CD4-positive, alpha-beta T cell (primary cell): ENCODE measurements at regions of chr1 and their contacts with region 1.

Region 1: DNA sequence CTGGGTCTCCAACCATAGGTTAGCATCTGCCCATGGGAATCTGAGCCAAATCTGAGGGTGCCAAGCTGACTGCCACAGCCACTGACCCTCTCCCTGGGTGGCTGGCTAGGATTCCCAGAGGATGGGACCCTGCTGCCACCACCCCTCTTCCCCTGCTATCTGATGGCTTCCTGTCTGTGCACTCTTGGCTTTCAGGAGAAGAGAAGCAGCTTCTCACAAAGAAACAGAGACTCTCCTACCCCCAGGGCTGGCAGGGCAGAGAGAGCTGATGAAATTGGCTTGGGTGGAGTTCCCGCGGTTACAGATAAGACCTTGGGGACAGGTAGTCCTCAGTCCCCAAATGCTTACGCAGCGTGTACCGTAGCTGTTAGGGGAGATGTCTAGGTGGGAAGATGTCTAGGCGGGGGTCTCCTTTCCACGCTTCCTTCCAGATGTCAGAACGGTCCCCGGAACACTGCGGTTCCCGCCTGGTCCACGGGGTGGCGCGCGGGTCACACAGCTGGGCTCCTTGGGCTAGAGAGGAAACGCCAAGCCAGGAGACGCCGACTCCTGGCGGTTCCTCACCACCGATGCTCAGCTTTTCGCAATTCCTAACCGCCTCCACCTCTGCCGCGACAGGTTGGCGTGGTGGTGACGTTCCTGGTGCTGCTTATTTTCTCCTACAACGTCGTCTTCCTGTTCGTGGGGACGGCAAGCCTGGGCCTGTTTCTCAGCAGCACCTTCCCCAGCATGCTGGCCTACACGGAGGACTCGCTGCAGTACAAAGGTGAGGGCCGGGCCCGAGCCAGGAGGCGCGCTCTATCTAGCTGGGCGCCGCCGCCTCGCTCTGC is 40.1 kb downstream of the ELK4 start:
- DNase-seq: peak; percentile 81 to 94 (median 88)
- ATAC-seq: peak; percentile 85
- H3K4me3 ChIP-seq: peak overlapping the region; percentile 50
- H3K4me3 Mint-ChIP-seq: peak overlapping the region; percentile 90
- H3K27ac ChIP-seq: peak overlapping the region; percentile 23 to 45
- H3K27ac Mint-ChIP-seq: peak overlapping the region; percentile 99
- H3K4me1 ChIP-seq: peaks cover 31% of the 10 kb centered on the region
- H3K4me1 Mint-ChIP-seq: peaks cover 50% of the 10 kb centered on the region
- H3K27me3 ChIP-seq: no peaks in the 10 kb centered on the region
- H3K27me3 Mint-ChIP-seq: no peaks in the 10 kb centered on the region
- CTCF ChIP-seq: peak; percentile 96

Region 2: GRCh38 chr1:205528887-205529825 is 62.6 kb before region 1 on chr1:
- CTCF ChIA-PET with region 1: interaction called, 11 read pairs
- POLR2A ChIA-PET with region 1: no interaction called
- intact Hi-C with region 1: loop called in 1 of 2 experiments (anchors 2 kb)
- DNase-seq: peak; percentile 62 to 89 (median 80)
- ATAC-seq: peak; percentile 85
- H3K4me3 ChIP-seq: peak overlapping the region; percentile 32
- H3K4me3 Mint-ChIP-seq: no peak overlapping the region
- H3K27ac ChIP-seq: no peak overlapping the region
- H3K27ac Mint-ChIP-seq: no peak overlapping the region
- H3K4me1 ChIP-seq: peaks cover 9% of the 10 kb centered on the region
- H3K4me1 Mint-ChIP-seq: no peaks in the 10 kb centered on the region
- H3K27me3 ChIP-seq: no peaks in the 10 kb centered on the region
- H3K27me3 Mint-ChIP-seq: no peaks in the 10 kb centered on the region
- CTCF ChIP-seq: peak; percentile 85

Region 3: DNA sequence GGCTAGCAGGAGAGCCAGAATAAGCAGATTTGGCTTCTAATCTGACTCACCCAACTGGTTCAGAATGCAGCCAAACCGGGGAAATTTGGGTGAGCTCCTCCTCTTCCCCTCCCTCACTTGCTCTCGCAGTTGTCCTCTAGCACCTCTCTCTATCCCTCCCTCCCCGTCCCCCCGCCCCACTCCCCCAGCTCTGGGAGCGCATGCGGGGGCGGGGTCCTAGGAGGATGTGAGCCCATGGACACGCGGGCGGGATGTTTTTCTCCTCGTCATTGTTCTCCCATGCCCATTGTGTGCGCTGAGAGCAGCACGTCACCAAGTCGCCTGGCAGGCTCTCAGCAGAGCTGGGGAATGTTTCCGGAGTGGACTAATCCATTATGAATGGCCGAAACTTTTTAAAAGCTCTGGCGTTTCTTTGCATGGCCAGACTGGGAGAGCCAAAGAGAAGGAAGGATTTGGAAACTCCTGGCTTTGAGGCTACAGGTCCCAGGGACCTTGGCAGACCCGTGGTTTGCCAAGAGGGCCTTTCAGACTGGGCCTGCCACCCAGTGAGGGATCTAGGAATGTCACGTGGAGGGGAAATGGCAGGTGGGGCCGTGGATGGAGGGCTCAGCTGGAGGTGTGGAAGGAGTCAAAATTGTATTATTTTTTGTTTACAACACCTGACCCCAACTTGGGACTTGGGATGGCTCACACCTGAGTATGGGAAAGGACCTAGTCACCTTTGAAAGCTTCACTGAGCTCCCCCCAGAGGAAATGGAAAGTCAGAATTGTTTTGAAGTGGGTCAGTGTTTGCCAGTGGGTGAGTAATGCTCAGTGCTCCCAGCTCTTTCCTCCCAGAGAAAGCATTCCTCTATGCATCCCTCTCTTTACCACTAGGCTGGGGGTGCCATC is 48.1 kb before region 1 on chr1:
- CTCF ChIA-PET with region 1: no interaction called
- POLR2A ChIA-PET with region 1: no interaction called
- intact Hi-C with region 1: no loop called
- DNase-seq: peak in 4 of 14 experiments; percentile 15 to 60 (median 30)
- ATAC-seq: no peak
- H3K4me3 ChIP-seq: no peak overlapping the region
- H3K4me3 Mint-ChIP-seq: no peak overlapping the region
- H3K27ac ChIP-seq: no peak overlapping the region
- H3K27ac Mint-ChIP-seq: no peak overlapping the region
- H3K4me1 ChIP-seq: peaks cover 9% of the 10 kb centered on the region
- H3K4me1 Mint-ChIP-seq: peaks cover 5% of the 10 kb centered on the region
- H3K27me3 ChIP-seq: peaks cover 17 to 29% of the 10 kb centered on the region in 2 experiments
- H3K27me3 Mint-ChIP-seq: peaks cover 61% of the 10 kb centered on the region
- CTCF ChIP-seq: no peak

Region 4: DNA sequence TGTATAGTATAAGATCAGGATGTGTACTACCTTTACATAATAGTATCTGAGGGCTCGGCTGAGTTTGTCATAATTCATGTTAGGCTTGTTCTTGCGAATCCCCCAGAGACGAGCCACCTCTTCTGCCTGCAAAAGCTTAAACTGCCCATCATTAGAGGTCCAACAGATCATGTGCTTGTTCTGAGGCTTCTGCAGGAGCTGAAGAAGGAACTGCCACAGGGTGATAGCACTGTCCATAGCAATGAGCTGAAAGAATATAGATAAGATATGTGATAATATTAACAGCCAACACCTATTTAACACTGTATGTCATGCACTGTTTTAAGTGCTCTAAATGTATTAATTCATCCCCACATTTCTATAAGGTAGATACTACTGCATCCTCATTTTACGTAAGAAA is 31.9 kb after region 1 on chr1:
- CTCF ChIA-PET with region 1: interaction called, 194 read pairs
- POLR2A ChIA-PET with region 1: interaction called, 360 read pairs
- intact Hi-C with region 1: no loop called
- DNase-seq: no peak
- ATAC-seq: no peak
- H3K4me3 ChIP-seq: no peak overlapping the region
- H3K4me3 Mint-ChIP-seq: no peak overlapping the region
- H3K27ac ChIP-seq: no peak overlapping the region
- H3K27ac Mint-ChIP-seq: peak overlapping the region; percentile 75
- H3K4me1 ChIP-seq: peaks cover 19% of the 10 kb centered on the region
- H3K4me1 Mint-ChIP-seq: peaks cover 56% of the 10 kb centered on the region
- H3K27me3 ChIP-seq: no peaks in the 10 kb centered on the region
- H3K27me3 Mint-ChIP-seq: no peaks in the 10 kb centered on the region
- CTCF ChIP-seq: no peak

Region 5: DNA sequence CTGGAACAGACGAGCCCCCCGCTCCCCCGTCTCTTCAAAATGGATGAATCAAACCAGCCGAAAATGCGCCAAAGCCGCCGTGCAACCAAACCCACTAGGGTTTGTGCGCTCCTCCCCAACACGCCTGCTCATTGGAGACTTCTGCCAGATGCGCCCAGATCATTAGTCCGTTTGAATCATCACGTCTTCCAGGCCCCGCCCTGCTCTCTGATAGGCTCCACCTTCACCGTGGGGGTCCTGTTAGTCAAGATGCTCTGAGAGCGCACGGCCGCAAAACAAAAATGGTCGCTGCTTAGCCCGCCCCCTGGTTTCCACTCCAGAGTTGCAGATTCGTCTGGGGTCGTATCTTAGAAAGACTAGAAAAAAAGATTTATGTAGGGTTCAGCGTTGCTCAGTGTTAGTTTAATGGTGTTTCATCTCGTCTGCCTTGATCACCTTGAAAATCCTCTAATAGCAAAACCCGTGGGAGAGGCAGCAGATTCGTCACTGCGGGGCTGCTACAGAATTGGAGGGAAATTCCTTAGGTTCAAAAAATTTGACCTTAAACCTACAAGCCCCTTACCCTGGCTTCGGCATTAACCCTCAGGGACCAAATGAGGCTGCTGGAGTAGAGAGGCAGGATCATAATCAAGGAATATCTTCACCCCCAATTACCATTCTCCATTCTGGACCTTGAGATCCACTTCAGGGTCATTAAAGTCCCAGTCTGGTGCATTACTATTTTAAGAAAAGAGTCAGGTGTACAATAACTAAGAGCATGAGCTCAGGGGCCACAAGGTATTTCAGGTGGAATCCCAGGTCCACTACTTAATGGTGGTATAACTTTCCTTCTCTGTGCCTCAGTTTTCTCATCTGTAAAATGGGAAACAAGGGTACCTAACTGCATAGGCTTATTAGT is 158.7 kb after region 1 on chr1 and contains the start of gene NUCKS1:
- CTCF ChIA-PET with region 1: no interaction called
- POLR2A ChIA-PET with region 1: interaction called, 22 read pairs
- intact Hi-C with region 1: no loop called
- DNase-seq: peak; percentile 93 to 99 (median 96)
- ATAC-seq: peak; percentile 79
- H3K4me3 ChIP-seq: peak within 1 kb of the TSS; percentile 71
- H3K4me3 Mint-ChIP-seq: peak within 1 kb of the TSS; percentile 99
- H3K27ac ChIP-seq: peak within 1 kb of the TSS; percentile 75 to 80
- H3K27ac Mint-ChIP-seq: peak within 1 kb of the TSS; percentile 93
- H3K4me1 ChIP-seq: peaks cover 8% of the 10 kb centered on the region
- H3K4me1 Mint-ChIP-seq: peaks cover 39% of the 10 kb centered on the region
- H3K27me3 ChIP-seq: no peaks in the 10 kb centered on the region
- H3K27me3 Mint-ChIP-seq: no peaks in the 10 kb centered on the region
- CTCF ChIP-seq: no peak
- total RNA-seq, gene NUCKS1: 80.6 to 84.7 TPM

Region 6: GRCh38 chr1:205783904-205784303 is 192.2 kb after region 1 on chr1:
- CTCF ChIA-PET with region 1: no interaction called
- POLR2A ChIA-PET with region 1: interaction called, 3 read pairs
- intact Hi-C with region 1: loop called (anchors 5 kb)
- DNase-seq: no peak
- ATAC-seq: no peak
- H3K4me3 ChIP-seq: no peak overlapping the region
- H3K4me3 Mint-ChIP-seq: no peak overlapping the region
- H3K27ac ChIP-seq: no peak overlapping the region
- H3K27ac Mint-ChIP-seq: no peak overlapping the region
- H3K4me1 ChIP-seq: peaks cover 8% of the 10 kb centered on the region
- H3K4me1 Mint-ChIP-seq: peaks cover 7% of the 10 kb centered on the region
- H3K27me3 ChIP-seq: no peaks in the 10 kb centered on the region
- H3K27me3 Mint-ChIP-seq: no peaks in the 10 kb centered on the region
- CTCF ChIP-seq: no peak